BJ (cell line): ENCODE measurements at regions of chr12 and their contacts with region 1.

Region 1: DNA sequence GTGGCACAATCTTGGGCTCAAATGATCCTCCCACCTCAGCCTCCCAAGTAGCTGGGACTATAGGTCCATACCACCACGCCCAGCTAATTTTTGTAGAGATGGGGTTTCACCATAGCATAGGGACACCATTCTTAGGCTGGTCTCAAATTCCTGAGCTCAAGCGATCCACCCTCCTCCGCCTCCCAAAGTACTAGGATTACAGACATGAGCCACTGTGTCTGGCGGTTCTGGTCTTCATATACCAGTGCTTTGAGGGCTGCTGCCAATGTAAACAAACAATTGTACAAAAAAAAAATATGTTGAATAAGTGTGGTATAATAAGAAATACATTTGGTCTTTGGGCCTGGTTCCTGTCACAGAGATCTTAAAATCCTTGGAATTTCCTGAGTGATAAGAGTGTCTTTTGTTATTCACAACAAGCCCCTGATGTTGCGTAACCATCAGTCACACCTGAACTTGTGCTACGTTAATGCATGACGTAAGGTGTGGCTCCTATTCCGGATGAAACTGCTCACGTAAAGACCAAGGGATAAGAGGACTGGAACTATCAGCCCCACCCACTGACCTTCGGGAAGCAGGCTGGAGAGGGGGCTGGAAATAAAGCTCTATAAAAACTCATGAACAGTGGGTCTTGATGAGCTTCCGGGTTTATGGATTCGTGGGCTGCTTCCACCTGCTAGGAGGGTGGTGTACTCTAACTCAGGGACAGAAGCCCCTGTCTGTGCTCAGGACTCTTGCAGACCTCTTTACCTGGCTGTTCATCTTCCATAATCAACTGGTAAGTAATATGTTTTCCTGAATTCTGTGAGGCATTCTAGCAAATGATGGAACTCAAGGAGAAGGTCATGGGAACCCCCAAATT is 16.5 kb upstream of the RIMKLB start:
- DNase-seq: no peak
- H3K4me3 ChIP-seq: no peak overlapping the region
- H3K27me3 ChIP-seq: no peaks in the 10 kb centered on the region
- CTCF ChIP-seq: no peak

Region 2: GRCh38 chr12:8527250-8528130 is 153.8 kb before region 1 on chr12:
- CTCF ChIA-PET with region 1: no interaction called
- POLR2A ChIA-PET with region 1: no interaction called
- DNase-seq: no peak
- H3K4me3 ChIP-seq: no peak overlapping the region
- H3K27me3 ChIP-seq: no peaks in the 10 kb centered on the region
- CTCF ChIP-seq: no peak

Region 3: GRCh38 chr12:8823565-8824300 is 142.5 kb after region 1 on chr12:
- CTCF ChIA-PET with region 1: interaction called, 21 read pairs
- POLR2A ChIA-PET with region 1: no interaction called
- DNase-seq: no peak
- H3K4me3 ChIP-seq: no peak overlapping the region
- H3K27me3 ChIP-seq: no peaks in the 10 kb centered on the region
- CTCF ChIP-seq: peak; percentile 67

Region 4: GRCh38 chr12:8860165-8860961 is 179.1 kb after region 1 on chr12:
- CTCF ChIA-PET with region 1: interaction called, 42 read pairs
- POLR2A ChIA-PET with region 1: no interaction called
- DNase-seq: no peak
- H3K4me3 ChIP-seq: no peak overlapping the region
- H3K27me3 ChIP-seq: no peaks in the 10 kb centered on the region
- CTCF ChIP-seq: peak; percentile 70